Right ventricle myocardium inferior (tissue), 1 donor: ENCODE measurements at regions of chr21 and their contacts with region 1.

Region 1: GRCh38 chr21:34073032-34073869 is at the starts of genes MRPS6 and SLC5A3:
- DNase-seq: peak; percentile 92
- ATAC-seq: peak; percentile 90
- total RNA-seq, gene MRPS6: 72.2 TPM
- total RNA-seq, gene SLC5A3: 6.2 TPM

Region 2: DNA sequence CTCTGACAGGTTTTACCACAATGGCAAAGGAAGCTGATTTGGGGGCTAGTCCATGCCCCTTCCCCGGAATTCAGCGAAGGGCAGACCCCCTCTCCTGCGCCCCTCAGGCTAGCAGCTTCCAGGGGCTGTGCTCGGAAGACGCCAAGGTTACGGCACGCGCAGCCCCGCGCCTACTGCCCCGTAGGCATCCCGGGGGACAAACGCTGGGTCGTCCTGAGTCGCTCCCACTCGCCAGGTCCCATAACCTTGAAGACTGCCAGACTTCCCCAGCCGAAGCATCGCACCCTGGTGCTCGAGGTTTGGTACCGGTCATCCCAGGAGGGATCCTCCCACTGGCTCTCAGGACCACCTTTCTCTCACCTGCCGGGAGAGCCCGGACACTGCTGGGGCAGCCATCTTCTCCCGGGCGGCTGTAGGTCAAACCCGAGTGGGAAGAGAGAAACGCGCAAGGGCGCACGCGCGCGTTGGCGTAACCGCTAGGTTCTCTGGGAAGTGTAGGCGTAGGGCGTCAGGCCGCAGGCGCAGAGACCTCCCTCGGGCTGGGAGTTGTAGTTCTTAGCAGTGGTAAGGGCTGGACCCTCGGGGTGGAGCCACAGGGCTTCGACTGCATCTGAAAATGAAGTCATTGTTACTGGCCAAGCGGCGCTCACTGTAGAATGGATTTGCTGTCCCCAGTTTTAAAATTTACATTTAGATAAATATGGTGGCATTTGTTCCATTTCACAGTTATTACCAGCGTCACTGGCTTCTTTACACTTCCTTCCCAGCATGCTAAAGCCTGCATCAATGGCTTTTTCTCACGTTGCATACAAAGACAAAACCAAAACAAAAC is 157.7 kb before region 1 on chr21 and contains the start of gene ATP5PO:
- intact Hi-C with region 1: loop called (anchors 2 kb)
- DNase-seq: peak; percentile 99
- ATAC-seq: peak; percentile 100
- total RNA-seq, gene ATP5PO: 886 TPM

Region 3: DNA sequence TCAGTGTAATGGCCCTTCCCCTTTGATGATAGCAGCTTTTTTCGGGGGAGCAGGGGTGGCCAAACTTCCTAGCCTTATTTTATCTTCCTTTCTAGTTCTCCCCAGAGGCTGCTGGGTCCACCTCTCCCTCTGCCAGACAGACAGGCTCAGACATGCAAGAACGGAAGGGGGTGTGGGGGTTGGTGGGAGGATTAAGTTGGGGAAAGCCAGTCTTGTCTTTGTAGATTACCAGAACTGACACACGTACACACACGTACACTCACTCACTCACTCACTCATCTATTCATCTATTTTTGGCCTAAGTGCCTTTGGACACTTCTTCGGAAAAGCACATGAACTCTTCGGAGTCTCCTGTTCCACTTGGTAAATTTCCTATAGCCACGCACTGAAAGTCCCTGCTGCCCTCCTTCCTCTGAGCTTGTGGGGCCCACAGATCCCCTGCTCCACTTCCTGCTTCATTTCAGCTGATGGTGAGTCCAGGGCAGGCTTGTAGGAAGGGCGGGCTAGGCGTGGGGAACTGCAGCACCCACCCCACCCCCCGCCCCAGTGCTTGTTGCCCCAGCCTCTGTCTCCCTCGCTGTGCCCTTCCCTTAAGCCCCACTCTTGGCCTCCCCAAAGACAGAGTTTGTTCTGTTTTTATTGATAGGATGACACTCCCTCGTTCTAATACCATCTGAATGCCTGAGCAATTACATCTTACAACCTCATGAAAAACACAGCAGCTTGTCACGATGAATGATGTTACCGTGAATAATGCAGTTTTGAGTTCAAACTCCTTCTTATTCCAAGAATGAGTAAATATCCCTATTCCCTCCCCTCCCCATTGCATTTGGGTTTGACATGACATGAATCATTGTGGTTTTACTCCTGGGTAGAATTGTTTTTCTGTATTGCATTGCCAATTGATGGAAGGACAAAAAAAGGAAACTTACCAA is 96.9 kb before region 1 on chr21:
- intact Hi-C with region 1: loop called (anchors 5 kb)
- DNase-seq: no peak
- ATAC-seq: peak; percentile 79

Region 4: GRCh38 chr21:34351786-34352241 is 278.6 kb after region 1 on chr21:
- intact Hi-C with region 1: loop called (anchors 2 kb)
- DNase-seq: no peak
- ATAC-seq: peak; percentile 80